MCF 10A (cell line): ENCODE measurements at regions of chr7 and their contacts with region 1.

Region 1: GRCh38 chr7:38195804-38196595 is 18.0 kb downstream of the STARD3NL start:
- DNase-seq: peak; percentile 55
- H3K4me3 Mint-ChIP-seq: peak overlapping the region; percentile 62
- H3K27ac Mint-ChIP-seq: peak overlapping the region; percentile 97
- H3K4me1 Mint-ChIP-seq: peaks cover 22% of the 10 kb centered on the region
- H3K27me3 Mint-ChIP-seq: no peaks in the 10 kb centered on the region
- CTCF ChIP-seq: no peak

Region 2: GRCh38 chr7:38178004-38178694 is 17.9 kb before region 1 on chr7 and contains the start of gene STARD3NL:
- CTCF ChIA-PET with region 1: interaction called, 7 read pairs
- POLR2A ChIA-PET with region 1: interaction called, 32 read pairs
- intact Hi-C with region 1: no loop called
- DNase-seq: peak; percentile 100
- H3K4me3 Mint-ChIP-seq: peak within 1 kb of the TSS; percentile 99
- H3K27ac Mint-ChIP-seq: peak within 1 kb of the TSS; percentile 84
- H3K4me1 Mint-ChIP-seq: peaks cover 13% of the 10 kb centered on the region
- H3K27me3 Mint-ChIP-seq: peaks cover 19% of the 10 kb centered on the region
- CTCF ChIP-seq: no peak
- total RNA-seq, gene STARD3NL: 24.5 and 25.6 TPM in 2 replicates